ENCODE measurements at regions of chr16 and their contacts with region 1.

Region 1: DNA sequence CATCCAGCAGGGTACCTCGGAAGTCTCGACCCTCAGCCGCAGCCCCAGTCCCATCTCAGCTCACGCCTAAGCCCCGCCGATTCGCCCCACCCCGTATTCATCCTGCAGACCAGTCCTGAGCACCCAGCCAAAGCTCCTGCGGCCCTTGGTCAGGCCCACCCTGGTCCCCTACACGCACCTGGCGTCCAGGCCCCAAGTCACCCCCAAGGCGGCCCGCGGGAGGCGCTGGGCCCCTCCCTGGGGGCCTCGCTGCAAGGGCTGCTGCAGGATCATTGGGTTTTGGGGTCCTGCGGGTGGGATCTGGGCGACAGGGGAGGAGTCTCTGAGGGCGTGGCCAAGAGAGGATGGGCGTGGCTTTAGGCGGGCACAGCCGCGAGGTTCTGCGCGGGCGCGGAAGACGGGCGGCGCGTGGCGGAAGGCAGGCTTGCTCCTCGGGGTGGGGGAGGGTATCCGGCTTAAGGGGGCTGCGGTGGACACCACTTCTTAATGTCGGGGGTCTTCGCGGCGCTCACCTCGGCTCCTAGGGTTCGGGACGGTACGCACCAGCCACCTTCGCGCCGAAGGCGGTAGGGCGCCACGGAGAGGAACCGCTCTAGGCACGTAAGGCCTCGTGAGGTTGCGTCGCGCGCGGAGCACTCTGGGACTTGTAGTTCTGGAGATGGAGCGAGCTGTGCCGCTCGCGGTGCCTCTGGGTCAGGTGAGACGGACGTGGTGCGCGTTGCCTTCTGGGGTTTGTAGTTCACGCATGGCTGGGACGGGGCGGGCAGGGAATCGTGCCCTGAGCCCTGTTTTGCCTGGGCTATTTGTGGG is at the starts of genes HCFC1R1 and THOC6:
- DNase-seq: peak; percentile 96 to 99 (median 98)

Region 2: GRCh38 chr16:3003582-3004302 is 20.1 kb before region 1 on chr16:
- intact Hi-C with region 1: loop called (anchors 2 kb)
- DNase-seq: peak; percentile 92 to 99 (median 98)

Region 3: DNA sequence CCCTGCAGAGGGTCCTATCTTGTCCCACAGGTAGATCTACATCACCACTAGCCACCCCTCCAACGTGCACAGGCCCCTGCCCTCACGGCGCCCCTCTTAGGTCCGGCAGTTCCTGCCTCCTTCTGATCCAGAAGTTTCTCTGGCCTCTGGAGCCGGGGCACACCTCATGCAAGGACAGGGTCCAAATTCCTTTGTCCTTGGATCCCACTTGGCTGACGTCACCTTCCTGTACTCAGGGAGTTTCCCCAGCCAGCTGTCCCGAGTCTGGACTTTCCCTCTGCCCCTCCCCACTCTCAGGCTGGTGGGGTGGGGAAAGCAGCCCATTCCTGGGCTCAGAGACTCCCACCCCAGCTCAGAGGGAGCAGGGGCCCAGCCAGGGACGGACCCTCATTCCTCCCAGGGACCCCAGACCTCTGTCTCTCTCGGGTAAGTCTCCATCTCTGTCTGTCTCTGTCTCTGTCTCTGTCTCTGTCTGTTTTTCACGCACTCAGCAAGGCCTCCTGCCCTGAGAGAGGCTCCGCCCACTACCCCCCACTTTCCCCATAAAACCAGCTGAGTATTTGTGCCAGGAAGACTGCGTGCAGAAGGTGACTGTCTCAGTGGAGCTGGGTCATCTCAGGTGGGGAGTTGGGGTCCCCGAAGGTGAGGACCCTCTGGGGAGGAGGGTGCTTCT is 41.3 kb after region 1 on chr16 and contains the start of gene IL32:
- intact Hi-C with region 1: no loop called
- DNase-seq: no peak

Measured in head of caudate nucleus (tissue), 42 donors.